Endothelial cell of umbilical vein (primary cell): ENCODE measurements at regions of chr5 and their contacts with region 1.

Region 1: GRCh38 chr5:126600631-126601511 is at the start of gene PHAX:
- DNase-seq: peak; percentile 77
- H3K4me3 ChIP-seq: peak within 1 kb of the TSS; percentile 68 to 85 (median 83)
- H3K27ac ChIP-seq: peak within 1 kb of the TSS; percentile 61
- H3K4me1 ChIP-seq: peaks cover 19% of the 10 kb centered on the region
- H3K27me3 ChIP-seq: no peaks in the 10 kb centered on the region
- CTCF ChIP-seq: peak; percentile 82 to 85
- POLR2A ChIP-seq: peak; percentile 88
- total RNA-seq, gene PHAX: 48.2 and 51.2 TPM in 2 replicates

Region 2: GRCh38 chr5:126544087-126544740 is 56.7 kb before region 1 on chr5:
- CTCF ChIA-PET with region 1: interaction called, 13 read pairs
- POLR2A ChIA-PET with region 1: no interaction called
- dilution Hi-C with region 1: no loop called
- intact Hi-C with region 1: loop called (anchors 1 kb)
- DNase-seq: peak; percentile 53
- H3K4me3 ChIP-seq: no peak overlapping the region
- H3K27ac ChIP-seq: no peak overlapping the region
- H3K4me1 ChIP-seq: no peaks in the 10 kb centered on the region
- H3K27me3 ChIP-seq: no peaks in the 10 kb centered on the region
- CTCF ChIP-seq: peak; percentile 46 to 66
- POLR2A ChIP-seq: no peak

Region 3: GRCh38 chr5:126628102-126628501 is 27.2 kb after region 1 on chr5:
- CTCF ChIA-PET with region 1: no interaction called
- POLR2A ChIA-PET with region 1: no interaction called
- dilution Hi-C with region 1: no loop called
- intact Hi-C with region 1: no loop called
- DNase-seq: no peak
- H3K4me3 ChIP-seq: no peak overlapping the region
- H3K27ac ChIP-seq: no peak overlapping the region
- H3K4me1 ChIP-seq: peaks cover 10% of the 10 kb centered on the region
- H3K27me3 ChIP-seq: no peaks in the 10 kb centered on the region
- CTCF ChIP-seq: no peak
- POLR2A ChIP-seq: no peak

Region 4: GRCh38 chr5:127163750-127164149 is 562.9 kb after region 1 on chr5:
- CTCF ChIA-PET with region 1: no interaction called
- POLR2A ChIA-PET with region 1: no interaction called
- dilution Hi-C with region 1: no loop called
- intact Hi-C with region 1: no loop called
- DNase-seq: no peak
- H3K4me3 ChIP-seq: no peak overlapping the region
- H3K27ac ChIP-seq: no peak overlapping the region
- H3K4me1 ChIP-seq: no peaks in the 10 kb centered on the region
- H3K27me3 ChIP-seq: peaks cover 0 to 2% of the 10 kb centered on the region in 2 experiments
- CTCF ChIP-seq: no peak
- POLR2A ChIP-seq: no peak